Ovary (tissue), 10 donors: ENCODE measurements at regions of chr10 and their contacts with region 1.

Region 1: DNA sequence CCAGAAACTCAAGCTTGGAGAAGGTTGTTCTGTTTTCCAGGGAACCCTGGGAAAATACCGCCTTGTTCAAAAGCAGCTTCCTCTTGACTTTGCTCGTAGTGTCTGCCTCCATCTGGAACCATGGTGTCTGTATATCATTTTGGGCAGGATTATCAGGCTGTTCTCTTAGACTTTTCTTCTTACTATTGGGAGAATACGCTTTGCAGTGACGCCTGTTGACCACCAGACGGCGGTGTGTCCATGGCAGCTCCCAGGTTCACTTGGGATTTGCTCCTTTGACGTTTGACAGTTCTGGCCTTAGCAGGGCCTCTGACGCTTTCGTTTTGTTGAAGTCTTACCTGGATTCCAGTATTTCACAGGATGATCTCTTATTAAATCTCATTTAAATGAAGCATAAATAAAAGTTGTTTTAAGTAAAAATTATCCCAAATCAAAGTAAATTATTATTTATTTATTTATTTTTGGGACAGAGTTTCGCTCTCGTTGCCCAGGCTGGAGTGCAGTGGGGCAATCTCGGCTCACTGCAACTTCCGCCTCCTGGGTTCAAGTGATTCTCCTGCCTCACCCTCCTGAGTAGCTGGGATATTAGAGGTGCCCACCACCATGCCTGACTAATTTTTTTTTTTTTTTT is 41.8 kb upstream of the GJD4 start:
- DNase-seq: peak in 4 of 5 donors; percentile 25 to 64 (median 56)
- H3K4me3 ChIP-seq: no peak overlapping the region
- H3K27ac ChIP-seq: no peak overlapping the region
- H3K4me1 ChIP-seq: no peaks in the 10 kb centered on the region
- H3K27me3 ChIP-seq: no peaks in the 10 kb centered on the region
- CTCF ChIP-seq: peak; percentile 69 to 70 (median 69)
- EP300 ChIP-seq: no peak
- POLR2A ChIP-seq: no peak

Region 2: DNA sequence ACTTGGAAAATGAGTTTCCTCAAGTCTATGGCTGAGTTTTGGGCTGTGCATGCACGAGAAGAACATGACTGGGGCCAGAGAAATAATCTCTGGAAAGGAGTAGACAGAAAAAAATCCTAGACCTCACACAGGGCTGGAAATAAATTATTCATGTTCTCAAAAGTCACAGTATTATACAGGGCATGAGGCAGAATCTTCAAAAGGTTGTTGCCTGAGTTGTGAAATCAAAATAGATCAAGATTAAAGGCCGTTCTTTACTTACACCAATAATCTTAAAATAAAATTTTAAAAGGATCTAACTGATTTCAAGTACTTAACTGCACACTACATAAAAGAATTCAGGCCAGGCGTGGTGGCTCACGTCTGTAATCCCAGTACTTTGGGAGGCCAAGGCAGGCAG is 450.8 kb before region 1 on chr10:
- intact Hi-C with region 1: loop called in 1 of 4 experiments (anchors 10 kb)
- DNase-seq: no peak
- H3K4me3 ChIP-seq: no peak overlapping the region
- H3K27ac ChIP-seq: no peak overlapping the region
- H3K4me1 ChIP-seq: peaks cover 3% of the 10 kb centered on the region
- H3K27me3 ChIP-seq: no peaks in the 10 kb centered on the region
- CTCF ChIP-seq: no peak
- EP300 ChIP-seq: no peak
- POLR2A ChIP-seq: no peak

Region 3: GRCh38 chr10:35246770-35247343 is 316.5 kb before region 1 on chr10:
- intact Hi-C with region 1: loop called in 2 of 4 experiments (anchors 2 to 10 kb)
- DNase-seq: no peak
- H3K4me3 ChIP-seq: no peak overlapping the region
- H3K27ac ChIP-seq: no peak overlapping the region
- H3K4me1 ChIP-seq: no peaks in the 10 kb centered on the region
- H3K27me3 ChIP-seq: no peaks in the 10 kb centered on the region
- CTCF ChIP-seq: no peak
- EP300 ChIP-seq: no peak
- POLR2A ChIP-seq: no peak

Region 4: GRCh38 chr10:35336084-35336831 is 227.1 kb before region 1 on chr10 and contains the start of gene CCNY:
- intact Hi-C with region 1: loop called in 1 of 4 experiments (anchors 10 kb)
- DNase-seq: peak; percentile 76 to 86 (median 82)
- H3K4me3 ChIP-seq: peak within 1 kb of the TSS; percentile 98
- H3K27ac ChIP-seq: peak within 1 kb of the TSS; percentile 66 to 81
- H3K4me1 ChIP-seq: peaks cover 9% of the 10 kb centered on the region
- H3K27me3 ChIP-seq: no peaks in the 10 kb centered on the region
- CTCF ChIP-seq: no peak
- EP300 ChIP-seq: no peak
- POLR2A ChIP-seq: peak; percentile 65
- total RNA-seq, gene CCNY: 28.3 to 81.3 (median 60.9) TPM